ENCODE measurements at regions of chr2 and their contacts with region 1.

Region 1: GRCh38 chr2:64865073-64865830 is 123.9 kb upstream of the SLC1A4 start:
- DNase-seq: peak; percentile 67 to 79
- ATAC-seq: peak; percentile 89 to 92 (median 90)
- H3K4me3 ChIP-seq: peak overlapping the region; percentile 79
- H3K27ac ChIP-seq: peak overlapping the region; percentile 81
- H3K4me1 ChIP-seq: peaks cover 8% of the 10 kb centered on the region
- H3K27me3 ChIP-seq: no peaks in the 10 kb centered on the region
- CTCF ChIP-seq: peak; percentile 99

Region 2: DNA sequence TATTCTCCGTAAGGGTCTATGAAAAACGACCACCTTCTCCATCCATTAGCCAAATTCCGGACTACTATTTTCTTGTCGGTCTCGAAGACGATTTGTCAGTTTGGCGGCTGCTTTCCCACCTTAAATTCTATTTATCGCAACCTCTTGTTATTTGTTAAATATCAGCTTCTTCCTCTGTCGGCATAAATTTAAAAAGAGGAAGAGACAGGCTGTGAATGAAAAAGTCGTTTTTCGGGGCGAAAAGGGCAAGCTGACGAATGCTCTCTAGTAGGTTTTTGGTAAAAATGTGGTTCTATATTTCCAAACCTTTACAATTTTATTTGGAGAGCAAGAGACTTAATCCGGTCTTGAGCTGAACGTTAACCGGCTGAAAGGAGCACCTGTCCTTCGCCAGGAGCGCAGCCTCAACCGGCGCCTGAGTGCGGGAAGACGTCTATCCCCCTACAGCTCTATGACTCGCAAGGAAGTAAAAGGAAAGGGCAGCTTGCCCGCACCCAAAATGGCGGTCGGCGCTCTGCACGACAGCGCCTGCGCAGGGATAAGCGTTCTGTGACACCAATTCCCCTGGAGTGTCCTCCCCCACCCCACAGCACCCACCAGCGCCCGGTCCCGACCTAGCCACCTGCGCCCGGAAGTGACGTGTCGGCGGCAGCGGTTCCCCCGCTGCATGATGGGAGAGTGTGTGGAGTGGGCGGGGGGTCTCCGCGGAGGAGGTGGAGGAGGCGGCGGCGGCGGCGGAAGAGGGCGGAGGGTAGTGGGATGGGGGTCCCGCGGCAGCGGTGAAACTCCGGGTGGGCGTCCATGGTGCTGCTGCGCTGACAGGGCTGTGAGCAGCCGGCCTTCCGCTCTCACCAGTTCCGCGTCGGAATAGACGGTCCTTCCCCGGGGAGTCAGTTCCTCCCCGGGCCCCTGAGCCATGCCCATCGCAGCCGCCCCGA is 341.3 kb before region 1 on chr2 and contains the start of gene AFTPH:
- intact Hi-C with region 1: loop called in 1 of 2 experiments (anchors 2 kb)
- DNase-seq: peak; percentile 99
- ATAC-seq: peak; percentile 99 to 100 (median 100)
- H3K4me3 ChIP-seq: peak within 1 kb of the TSS; percentile 97
- H3K27ac ChIP-seq: peak within 1 kb of the TSS; percentile 97
- H3K4me1 ChIP-seq: peaks cover 20% of the 10 kb centered on the region
- H3K27me3 ChIP-seq: no peaks in the 10 kb centered on the region
- CTCF ChIP-seq: peak; percentile 10
- total RNA-seq, gene AFTPH: 12.2 to 15.6 (median 13.0) TPM

Region 3: GRCh38 chr2:64586883-64587481 is 278.3 kb before region 1 on chr2:
- intact Hi-C with region 1: loop called (anchors 2 to 5 kb)
- DNase-seq: no peak
- ATAC-seq: peak; percentile 62 to 84 (median 70)
- H3K4me3 ChIP-seq: no peak overlapping the region
- H3K27ac ChIP-seq: no peak overlapping the region
- H3K4me1 ChIP-seq: no peaks in the 10 kb centered on the region
- H3K27me3 ChIP-seq: no peaks in the 10 kb centered on the region
- CTCF ChIP-seq: peak; percentile 65

Region 4: GRCh38 chr2:64609227-64609941 is 255.9 kb before region 1 on chr2:
- intact Hi-C with region 1: loop called in 1 of 2 experiments (anchors 5 kb)
- DNase-seq: peak; percentile 66 to 86
- ATAC-seq: peak; percentile 80 to 87 (median 82)
- H3K4me3 ChIP-seq: peak overlapping the region; percentile 82
- H3K27ac ChIP-seq: peak overlapping the region; percentile 84
- H3K4me1 ChIP-seq: peaks cover 3% of the 10 kb centered on the region
- H3K27me3 ChIP-seq: no peaks in the 10 kb centered on the region
- CTCF ChIP-seq: peak; percentile 67

Region 5: DNA sequence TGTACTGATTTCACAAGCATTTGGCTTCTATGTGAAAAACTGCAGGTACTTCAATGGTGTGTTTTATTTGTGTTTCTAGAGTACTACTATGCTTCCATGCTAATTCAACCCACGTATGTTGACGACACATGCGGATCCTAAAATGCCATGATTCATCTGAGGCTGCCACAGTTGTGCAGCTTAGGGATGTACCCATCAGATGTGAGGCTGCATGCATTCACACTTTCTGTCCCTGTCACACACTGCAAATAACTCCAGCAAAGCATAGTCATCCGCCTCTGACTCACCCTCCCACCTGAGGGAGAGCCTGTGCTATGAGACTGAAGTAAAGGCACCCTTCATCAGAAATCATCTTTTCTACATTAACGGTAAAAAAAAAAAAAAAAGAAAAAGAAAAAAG is 189.4 kb before region 1 on chr2:
- intact Hi-C with region 1: no loop called
- DNase-seq: no peak
- ATAC-seq: peak; percentile 72 to 89 (median 78)
- H3K4me3 ChIP-seq: no peak overlapping the region
- H3K27ac ChIP-seq: no peak overlapping the region
- H3K4me1 ChIP-seq: peaks cover 15% of the 10 kb centered on the region
- H3K27me3 ChIP-seq: no peaks in the 10 kb centered on the region
- CTCF ChIP-seq: no peak

Region 6: GRCh38 chr2:64797881-64798575 is 67.2 kb before region 1 on chr2:
- intact Hi-C with region 1: no loop called
- DNase-seq: no peak
- ATAC-seq: no peak
- H3K4me3 ChIP-seq: no peak overlapping the region
- H3K27ac ChIP-seq: no peak overlapping the region
- H3K4me1 ChIP-seq: peaks cover 4% of the 10 kb centered on the region
- H3K27me3 ChIP-seq: peaks cover 0 to 7% (median 0%) of the 10 kb centered on the region in 3 donors
- CTCF ChIP-seq: no peak

Measured in psoas muscle (tissue), 8 donors.